Activated T-helper 1 cell treated with anti-CD3 and anti-CD28 coated beads, Interleukin-12 subunit alpha, Interleukin-12 subunit beta, Interleukin-2, Interleukin-4 antibody, amounts not matched to agents 30 ng/mL and 10 ng/mL and 1 ng/mL, durations not matched to agents 14 hours and 24 hours and 36 hours (primary cell): ENCODE measurements at regions of chr1 and their contacts with region 1.

Region 1: DNA sequence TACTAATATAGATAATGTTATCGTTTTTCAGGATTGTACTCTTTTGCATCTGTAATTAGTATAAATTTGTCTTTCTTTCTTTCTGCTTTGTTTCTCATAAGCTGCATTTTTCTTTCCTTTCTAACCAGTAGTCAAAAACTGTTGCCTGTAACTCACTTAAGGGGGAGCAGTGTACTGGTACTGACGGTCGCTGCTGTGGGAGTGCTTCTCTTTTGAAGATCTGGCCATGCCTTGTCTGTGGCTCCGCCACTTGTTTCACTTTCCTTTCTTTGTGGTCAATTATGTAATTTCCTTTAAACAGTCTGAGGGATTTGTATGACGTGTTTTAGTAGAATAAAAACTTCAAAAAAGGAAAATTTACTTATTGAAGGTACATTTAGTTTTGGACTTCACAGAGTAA is 37.0 kb downstream of the MIA3 start:
- DNase-seq: peak; percentile 73
- H3K4me3 Mint-ChIP-seq: peak overlapping the region; percentile 5
- H3K27ac Mint-ChIP-seq: peak overlapping the region; percentile 61
- H3K4me1 Mint-ChIP-seq: peaks cover 59% of the 10 kb centered on the region
- H3K27me3 Mint-ChIP-seq: no peaks in the 10 kb centered on the region

Region 2: GRCh38 chr1:221994274-221994698 is 660.6 kb before region 1 on chr1:
- intact Hi-C with region 1: loop called (anchors 10 kb)
- DNase-seq: no peak
- H3K4me3 Mint-ChIP-seq: no peak overlapping the region
- H3K27ac Mint-ChIP-seq: peak overlapping the region; percentile 77
- H3K4me1 Mint-ChIP-seq: peaks cover 40% of the 10 kb centered on the region
- H3K27me3 Mint-ChIP-seq: peaks cover 2% of the 10 kb centered on the region

Region 3: DNA sequence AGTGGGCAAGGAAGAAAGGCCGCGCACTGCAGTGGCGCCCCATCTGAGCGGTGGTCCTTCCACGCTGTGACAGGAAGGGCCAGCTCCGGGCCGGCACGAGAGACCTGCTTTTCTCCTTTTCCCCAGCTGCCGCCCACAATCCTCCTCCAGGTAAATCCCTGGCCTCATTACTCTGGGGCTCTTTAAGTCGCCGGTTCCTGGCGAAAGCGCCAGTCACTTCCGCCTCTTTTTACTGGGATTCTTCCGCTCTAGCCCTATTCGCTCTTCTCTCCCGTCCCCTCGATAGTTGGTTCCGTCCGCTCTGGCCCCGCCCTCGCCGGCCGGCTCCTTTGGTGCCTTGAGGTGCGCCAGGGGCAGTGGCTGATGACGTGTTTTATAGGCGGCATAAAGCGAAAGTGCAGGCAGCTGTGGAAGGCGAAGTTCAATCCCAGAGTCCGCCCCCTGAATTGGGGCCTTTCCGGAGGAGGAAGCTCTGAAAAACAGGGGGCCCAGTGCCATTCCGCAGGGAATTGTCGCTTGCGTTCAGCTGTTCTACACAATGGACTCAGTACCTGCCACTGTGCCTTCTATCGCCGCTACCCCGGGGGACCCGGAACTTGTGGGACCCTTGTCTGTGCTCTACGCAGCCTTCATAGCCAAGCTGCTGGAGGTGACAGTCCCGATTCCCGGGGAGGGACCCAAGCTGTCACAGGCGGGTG is 10.8 kb before region 1 on chr1:
- intact Hi-C with region 1: loop called (anchors 1 kb)
- DNase-seq: peak; percentile 98
- H3K4me3 Mint-ChIP-seq: peak overlapping the region; percentile 99
- H3K27ac Mint-ChIP-seq: peak overlapping the region; percentile 97
- H3K4me1 Mint-ChIP-seq: peaks cover 33% of the 10 kb centered on the region
- H3K27me3 Mint-ChIP-seq: no peaks in the 10 kb centered on the region

Region 4: GRCh38 chr1:222732216-222733159 is 77.6 kb after region 1 on chr1:
- intact Hi-C with region 1: loop called (anchors 1 kb)
- DNase-seq: no peak
- H3K4me3 Mint-ChIP-seq: no peak overlapping the region
- H3K27ac Mint-ChIP-seq: peak overlapping the region; percentile 35
- H3K4me1 Mint-ChIP-seq: peaks cover 13% of the 10 kb centered on the region
- H3K27me3 Mint-ChIP-seq: no peaks in the 10 kb centered on the region

Region 5: DNA sequence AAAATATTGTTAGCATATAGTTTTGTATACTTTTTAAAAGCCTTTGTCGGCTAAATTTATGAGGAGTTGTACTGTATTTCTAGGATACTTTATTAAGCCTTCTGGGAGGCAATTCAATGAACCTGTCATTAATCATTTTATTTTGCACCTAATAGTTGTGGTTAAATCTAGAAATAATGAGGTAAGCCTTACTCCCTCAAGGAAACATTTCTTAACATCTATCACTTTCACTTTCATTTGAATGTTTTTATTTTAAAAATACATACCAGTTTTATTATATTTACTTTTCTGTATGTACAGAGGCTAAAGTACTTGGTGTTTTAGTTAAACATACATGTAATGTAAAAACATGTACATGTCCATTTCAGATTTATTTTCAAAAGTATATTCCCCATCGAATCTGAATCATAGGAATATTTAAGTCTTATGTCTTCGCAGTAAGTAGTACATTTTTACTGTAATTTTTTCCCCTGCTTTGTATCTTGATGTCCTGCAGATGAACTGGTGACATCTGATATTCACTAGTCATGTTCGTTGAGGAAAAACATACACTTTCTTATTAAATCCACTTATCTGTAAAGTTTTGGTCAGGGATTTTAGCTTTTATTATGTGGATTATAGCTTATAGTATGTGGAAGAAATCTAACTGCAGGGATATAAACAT is 242.8 kb after region 1 on chr1:
- intact Hi-C with region 1: loop called (anchors 2 kb)
- DNase-seq: no peak
- H3K4me3 Mint-ChIP-seq: no peak overlapping the region
- H3K27ac Mint-ChIP-seq: peak overlapping the region; percentile 51
- H3K4me1 Mint-ChIP-seq: peaks cover 16% of the 10 kb centered on the region
- H3K27me3 Mint-ChIP-seq: peaks cover 4% of the 10 kb centered on the region

Region 6: DNA sequence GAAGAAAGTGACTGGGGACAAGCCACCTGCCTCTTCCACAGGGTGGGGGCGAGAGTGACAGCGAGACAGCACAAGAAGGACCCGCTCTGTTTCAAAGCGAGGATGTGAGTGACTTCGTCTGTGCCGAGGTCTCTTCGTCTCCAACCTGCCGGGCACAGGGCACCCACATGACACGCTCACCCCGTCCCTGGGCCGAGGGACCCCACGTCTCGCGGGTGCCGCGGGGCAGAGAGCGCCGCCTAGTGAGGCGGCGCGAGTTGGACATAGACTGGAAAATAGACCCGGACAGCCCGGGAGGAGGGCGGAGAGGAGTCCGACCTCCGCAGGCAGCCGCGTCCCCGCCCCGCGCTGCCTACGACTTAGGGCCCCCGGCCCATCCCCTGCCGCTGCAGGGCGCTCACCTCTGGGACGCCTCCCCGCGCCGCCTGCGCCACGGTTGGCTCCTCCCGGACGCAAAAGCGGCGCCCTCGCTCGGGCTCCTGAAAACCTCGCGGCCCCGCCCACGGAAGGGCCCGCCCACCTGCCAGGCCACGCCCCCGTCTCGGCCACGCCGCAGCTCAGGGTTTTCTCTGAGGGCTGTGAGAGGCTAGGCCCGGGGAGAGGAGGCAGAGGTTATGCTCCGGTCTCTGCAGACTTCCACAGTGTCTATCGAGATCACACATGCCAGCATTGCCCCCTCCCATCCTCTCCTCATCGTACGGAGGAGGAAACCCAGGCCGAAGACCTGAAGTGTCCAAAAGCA is 488.1 kb after region 1 on chr1 and contains the start of gene TLR5:
- intact Hi-C with region 1: loop called (anchors 1 kb)
- DNase-seq: peak; percentile 82
- H3K4me3 Mint-ChIP-seq: peak within 1 kb of the TSS; percentile 68
- H3K27ac Mint-ChIP-seq: peak within 1 kb of the TSS; percentile 18
- H3K4me1 Mint-ChIP-seq: peaks cover 7% of the 10 kb centered on the region
- H3K27me3 Mint-ChIP-seq: peaks cover 11% of the 10 kb centered on the region
- total RNA-seq, gene TLR5: not detected in 2 replicates